Activated CD4-positive, alpha-beta memory T cell treated with anti-CD3 and anti-CD28 coated beads for 36 hours (primary cell): ENCODE measurements at regions of chr19 and their contacts with region 1.

Region 1: GRCh38 chr19:36915992-36916830 is at the starts of genes ZNF568 and ZNF829:
- DNase-seq: peak; percentile 96
- H3K4me3 Mint-ChIP-seq: peak within 1 kb of the TSS; percentile 92
- H3K27ac Mint-ChIP-seq: peak within 1 kb of the TSS; percentile 94
- H3K4me1 Mint-ChIP-seq: peaks cover 29% of the 10 kb centered on the region
- H3K27me3 Mint-ChIP-seq: no peaks in the 10 kb centered on the region
- total RNA-seq, gene ZNF568: 4.8 to 6.3 TPM
- total RNA-seq, gene ZNF829: 3.8 to 4.3 TPM

Region 2: DNA sequence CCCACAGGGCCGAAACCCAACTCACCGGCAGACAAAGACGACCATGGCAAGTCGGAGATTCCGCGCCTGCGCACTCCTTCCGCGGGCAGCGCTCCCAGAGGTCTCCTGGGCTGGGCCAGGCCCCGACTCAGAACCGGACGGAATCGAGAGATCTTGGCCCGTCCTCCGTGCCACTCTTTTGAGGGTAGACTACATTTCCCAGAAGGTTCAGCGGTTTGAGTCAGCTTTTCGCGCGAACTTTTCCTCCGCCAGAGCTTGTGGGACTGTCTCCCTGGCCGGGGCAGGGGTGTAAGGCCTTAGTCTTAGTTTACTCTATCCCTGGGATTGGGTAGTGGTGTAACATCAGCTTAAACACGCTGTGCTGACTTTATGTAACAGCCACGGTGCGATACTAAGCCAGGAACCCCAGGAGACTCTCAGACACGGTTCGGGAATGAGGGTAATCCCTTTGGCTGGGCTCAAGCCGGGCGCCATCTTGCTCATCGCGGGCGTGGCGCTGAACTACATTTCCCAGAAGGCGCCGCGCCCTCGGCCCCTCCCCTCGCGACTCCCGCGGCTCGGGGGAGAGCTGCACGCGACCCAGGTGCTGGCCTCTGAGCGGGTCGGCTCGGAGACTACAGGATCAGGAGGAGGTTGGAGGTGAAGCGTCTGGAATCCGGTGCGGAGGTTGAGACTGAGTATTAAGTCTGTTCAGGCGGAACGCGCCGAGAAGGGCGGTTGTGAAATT is 387.9 kb before region 1 on chr19 and contains the start of gene ZNF260:
- CTCF ChIA-PET with region 1: no interaction called
- POLR2A ChIA-PET with region 1: no interaction called
- intact Hi-C with region 1: loop called (anchors 1 kb)
- DNase-seq: peak; percentile 96
- H3K4me3 Mint-ChIP-seq: peak within 1 kb of the TSS; percentile 99
- H3K27ac Mint-ChIP-seq: peak within 1 kb of the TSS; percentile 95
- H3K4me1 Mint-ChIP-seq: peaks cover 21% of the 10 kb centered on the region
- H3K27me3 Mint-ChIP-seq: no peaks in the 10 kb centered on the region
- total RNA-seq, gene ZNF260: 3.7 TPM

Region 3: GRCh38 chr19:36687214-36688056 is 228.8 kb before region 1 on chr19 and contains the start of gene ZNF567:
- CTCF ChIA-PET with region 1: no interaction called
- POLR2A ChIA-PET with region 1: no interaction called
- intact Hi-C with region 1: loop called (anchors 5 kb)
- DNase-seq: peak; percentile 99
- H3K4me3 Mint-ChIP-seq: peak within 1 kb of the TSS; percentile 99
- H3K27ac Mint-ChIP-seq: peak within 1 kb of the TSS; percentile 90
- H3K4me1 Mint-ChIP-seq: peaks cover 24% of the 10 kb centered on the region
- H3K27me3 Mint-ChIP-seq: no peaks in the 10 kb centered on the region
- total RNA-seq, gene ZNF567: 4.9 to 5.3 TPM

Region 4: GRCh38 chr19:36797786-36798108 is 118.5 kb before region 1 on chr19:
- CTCF ChIA-PET with region 1: no interaction called
- POLR2A ChIA-PET with region 1: no interaction called
- intact Hi-C with region 1: loop called (anchors 1 kb)
- DNase-seq: no peak
- H3K4me3 Mint-ChIP-seq: peak overlapping the region; percentile 80
- H3K27ac Mint-ChIP-seq: peak overlapping the region; percentile 89
- H3K4me1 Mint-ChIP-seq: peaks cover 8% of the 10 kb centered on the region
- H3K27me3 Mint-ChIP-seq: no peaks in the 10 kb centered on the region

Region 5: DNA sequence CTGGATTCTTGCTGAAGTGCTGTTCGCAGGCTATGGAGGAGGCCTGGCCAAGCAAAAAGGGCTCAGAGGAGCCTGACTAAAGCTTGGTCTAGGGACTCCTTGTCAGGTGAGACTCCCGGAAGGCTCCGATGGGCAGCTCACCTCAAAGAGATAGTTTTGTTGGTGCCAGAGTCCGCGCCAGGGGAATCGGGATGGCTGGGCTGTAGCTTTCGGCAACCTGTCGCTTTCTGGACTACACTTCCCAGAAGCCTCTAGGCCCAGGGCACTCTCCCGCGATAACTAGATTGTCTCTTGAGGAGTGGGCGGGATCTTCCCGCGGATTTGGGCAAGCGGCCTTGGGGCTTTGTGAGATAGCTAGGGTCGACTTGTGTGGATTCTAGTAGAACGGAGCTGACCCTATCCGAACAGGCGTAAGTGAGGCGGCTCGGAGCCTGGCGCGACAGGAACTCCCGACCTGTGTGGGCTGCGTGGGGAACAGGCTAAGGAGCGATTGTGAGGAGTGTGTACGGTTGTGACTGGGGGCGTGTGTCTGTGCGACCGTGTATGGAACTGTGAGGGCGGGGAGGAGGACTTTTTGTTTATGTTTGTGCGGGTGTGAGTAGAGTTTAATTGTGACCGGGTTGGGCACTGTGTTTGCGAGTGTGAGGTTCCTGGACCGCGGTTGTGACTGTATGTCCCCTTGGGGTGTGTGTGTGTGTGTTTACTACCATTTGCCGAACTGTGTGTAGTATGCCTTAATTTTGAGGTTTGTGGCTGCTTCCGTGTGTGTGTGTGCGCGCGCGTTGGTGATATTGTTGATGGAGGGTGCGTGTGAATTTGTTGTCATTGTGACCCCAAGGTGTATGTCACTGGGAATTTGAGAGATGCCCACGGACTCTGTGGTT is 65.4 kb before region 1 on chr19 and contains the start of gene ZNF345:
- CTCF ChIA-PET with region 1: interaction called, 6 read pairs
- POLR2A ChIA-PET with region 1: interaction called, 4 read pairs
- intact Hi-C with region 1: loop called (anchors 1 kb)
- DNase-seq: peak; percentile 92
- H3K4me3 Mint-ChIP-seq: no peak within 1 kb of the TSS
- H3K27ac Mint-ChIP-seq: no peak within 1 kb of the TSS
- H3K4me1 Mint-ChIP-seq: peaks cover 12% of the 10 kb centered on the region
- H3K27me3 Mint-ChIP-seq: no peaks in the 10 kb centered on the region
- total RNA-seq, gene ZNF345: 3.8 to 4.2 TPM

Region 6: GRCh38 chr19:37172368-37173366 is 256.5 kb after region 1 on chr19 and contains the start of gene ZNF585A:
- CTCF ChIA-PET with region 1: no interaction called
- POLR2A ChIA-PET with region 1: no interaction called
- intact Hi-C with region 1: loop called (anchors 2 kb)
- DNase-seq: peak; percentile 92
- H3K4me3 Mint-ChIP-seq: no peak within 1 kb of the TSS
- H3K27ac Mint-ChIP-seq: no peak within 1 kb of the TSS
- H3K4me1 Mint-ChIP-seq: no peaks in the 10 kb centered on the region
- H3K27me3 Mint-ChIP-seq: no peaks in the 10 kb centered on the region
- total RNA-seq, gene ZNF585A: 7.5 to 11.9 TPM

Region 7: DNA sequence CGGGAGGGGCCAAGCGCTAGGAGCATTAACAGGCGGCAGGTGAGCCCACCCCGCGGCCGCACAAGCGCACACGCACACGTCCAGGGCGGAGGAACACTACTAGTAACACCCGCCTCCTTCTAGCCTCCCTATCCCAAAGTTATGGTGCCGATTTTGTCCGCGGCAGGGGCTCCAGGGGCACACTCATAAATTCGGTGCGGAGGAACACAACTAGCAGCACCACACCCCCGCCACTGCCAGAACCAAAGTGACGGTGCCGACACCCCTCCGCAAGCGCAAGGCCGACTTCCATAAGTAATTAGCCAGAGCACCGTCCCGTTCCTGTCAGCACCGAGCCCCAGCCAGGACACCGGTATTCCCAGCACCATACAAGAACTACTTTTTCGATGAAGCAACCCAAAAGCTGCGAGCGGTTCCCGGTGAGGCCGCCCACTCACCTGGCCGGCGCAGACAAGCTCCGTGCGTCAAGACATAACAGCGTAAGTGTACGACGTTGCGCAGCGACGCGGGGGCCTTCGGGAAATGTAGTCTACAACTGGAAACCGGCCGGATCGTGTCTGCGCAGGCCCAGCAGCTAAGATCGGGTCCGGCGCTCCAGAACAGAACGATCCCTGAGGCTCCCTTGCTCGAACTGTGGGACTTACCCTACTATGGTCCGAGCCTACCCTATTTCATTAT is 678.2 kb after region 1 on chr19 and contains the starts of genes ZNF540 and ZNF571:
- CTCF ChIA-PET with region 1: no interaction called
- POLR2A ChIA-PET with region 1: no interaction called
- intact Hi-C with region 1: loop called (anchors 1 kb)
- DNase-seq: peak; percentile 96
- H3K4me3 Mint-ChIP-seq: peak within 1 kb of the TSS; percentile 86
- H3K27ac Mint-ChIP-seq: peak within 1 kb of the TSS; percentile 100
- H3K4me1 Mint-ChIP-seq: peaks cover 31% of the 10 kb centered on the region
- H3K27me3 Mint-ChIP-seq: no peaks in the 10 kb centered on the region
- total RNA-seq, gene ZNF540: 0.86 to 1.1 TPM
- total RNA-seq, gene ZNF571: 2.7 to 4.0 TPM